ENCODE measurements at regions of chr6 and their contacts with region 1.

Region 1: GRCh38 chr6:34696739-34697543 is at the start of gene ILRUN:
- DNase-seq: peak; percentile 76
- ATAC-seq: peak; percentile 79
- H3K4me3 ChIP-seq: peak within 1 kb of the TSS; percentile 94
- H3K27ac ChIP-seq: peak within 1 kb of the TSS; percentile 94
- H3K4me1 ChIP-seq: no peaks in the 10 kb centered on the region; the same call in 1 of the 2 replicates
- H3K27me3 ChIP-seq: no peaks in the 10 kb centered on the region
- CTCF ChIP-seq: no peak
- EP300 ChIP-seq: no peak
- POLR2A ChIP-seq: peak; percentile 59
- RAD21 ChIP-seq: no peak
- polyA plus RNA-seq, gene ILRUN: 21.0 to 27.2 TPM

Region 2: DNA sequence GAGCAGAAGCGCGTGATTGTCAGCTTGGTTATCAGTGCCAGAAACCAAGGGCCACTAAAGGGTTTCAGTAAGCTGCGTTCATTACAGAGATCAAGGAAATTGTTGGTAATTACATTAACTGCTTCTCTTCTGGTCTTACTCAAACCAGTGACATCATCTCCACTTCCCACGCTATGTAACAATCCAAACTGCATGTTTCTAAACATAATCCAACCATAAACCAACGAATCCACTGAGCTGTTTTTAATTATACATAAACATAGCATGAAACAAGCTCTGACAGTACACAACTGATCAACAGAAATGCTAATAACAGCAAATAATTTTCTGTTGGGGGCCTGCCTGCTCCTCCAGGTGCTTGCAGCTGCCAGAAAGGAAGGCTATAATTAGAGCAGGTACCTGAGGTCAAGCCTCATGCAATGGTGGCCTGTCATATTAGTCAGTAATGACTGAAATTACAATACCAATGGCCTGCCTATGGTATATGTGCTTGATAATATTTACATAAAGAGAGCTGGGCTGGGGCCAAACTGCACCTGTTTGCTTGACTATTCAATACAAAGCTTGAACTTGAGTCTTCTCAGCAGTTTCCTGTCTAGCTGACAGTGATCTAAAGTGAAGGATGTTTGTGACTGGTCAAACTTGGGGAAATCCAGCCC is 40.4 kb before region 1 on chr6:
- CTCF ChIA-PET with region 1: interaction called, 8 read pairs
- POLR2A ChIA-PET with region 1: interaction called, 47 read pairs
- RAD21 ChIA-PET with region 1: interaction called, 35 read pairs
- SMC1A ChIA-PET with region 1: interaction called, 44 read pairs
- in situ Hi-C with region 1: no loop called
- intact Hi-C with region 1: no loop called
- DNase-seq: peak; percentile 97
- ATAC-seq: peak; percentile 89
- H3K4me3 ChIP-seq: peak overlapping the region; percentile 58; the same call in 1 of the 2 replicates
- H3K27ac ChIP-seq: peak overlapping the region; percentile 100
- H3K4me1 ChIP-seq: peaks cover 60% of the 10 kb centered on the region
- H3K27me3 ChIP-seq: no peaks in the 10 kb centered on the region
- CTCF ChIP-seq: no peak
- EP300 ChIP-seq: peak; percentile 95 to 98
- POLR2A ChIP-seq: peak; percentile 57
- RAD21 ChIP-seq: peak; percentile 19; the same call in 1 of the 2 replicates

Region 3: DNA sequence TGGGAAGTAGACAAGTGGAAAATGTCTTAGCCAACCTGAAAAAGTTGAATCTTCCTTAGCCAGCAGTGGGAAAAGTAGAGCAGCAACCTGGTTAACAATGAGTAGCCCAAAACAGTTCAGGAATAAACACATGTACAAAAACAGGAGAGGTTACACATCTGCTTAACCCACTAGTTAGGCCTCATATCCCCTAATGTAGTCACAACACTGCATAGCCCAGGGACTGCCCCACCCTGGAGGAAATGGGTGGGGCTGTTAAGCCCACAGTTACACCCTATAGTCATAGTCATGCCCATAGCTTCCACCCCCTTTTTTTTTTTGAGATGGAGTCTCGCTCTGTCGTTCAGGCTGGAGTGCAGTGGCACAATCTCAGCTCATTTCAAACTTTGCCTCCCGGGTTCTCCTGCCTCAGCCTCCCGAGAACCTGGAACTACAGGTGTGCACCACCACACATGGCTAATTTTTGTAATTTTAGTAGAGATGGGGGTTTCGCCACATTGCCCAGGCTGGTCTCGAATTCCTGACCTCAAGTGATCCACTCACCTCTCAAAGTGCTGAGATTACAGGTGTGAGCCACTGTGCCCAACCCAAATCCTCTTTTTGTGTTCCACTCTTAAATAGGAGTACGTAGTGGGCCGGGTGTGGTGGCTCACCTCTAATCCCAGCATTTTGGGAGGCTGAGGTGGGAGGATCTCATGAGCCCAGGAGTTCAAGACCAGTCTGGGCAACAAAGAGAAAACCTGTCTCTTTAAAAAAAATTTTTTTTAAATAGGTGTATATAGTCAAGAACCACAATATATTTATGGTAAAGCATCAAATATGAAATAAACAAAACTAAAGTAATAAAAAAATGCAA is 24.9 kb before region 1 on chr6:
- CTCF ChIA-PET with region 1: interaction called, 6 read pairs
- POLR2A ChIA-PET with region 1: interaction called, 41 read pairs
- RAD21 ChIA-PET with region 1: interaction called, 60 read pairs
- SMC1A ChIA-PET with region 1: interaction called, 100 read pairs
- in situ Hi-C with region 1: no loop called
- intact Hi-C with region 1: no loop called
- DNase-seq: peak; percentile 84
- ATAC-seq: peak; percentile 88
- H3K4me3 ChIP-seq: peak overlapping the region; percentile 46
- H3K27ac ChIP-seq: peak overlapping the region; percentile 92
- H3K4me1 ChIP-seq: peaks cover 38% of the 10 kb centered on the region
- H3K27me3 ChIP-seq: no peaks in the 10 kb centered on the region
- CTCF ChIP-seq: no peak
- EP300 ChIP-seq: peak; percentile 39 to 44; a peak in 2 of 4 replicates
- POLR2A ChIP-seq: peak; percentile 35; the same call in 1 of the 2 replicates
- RAD21 ChIP-seq: no peak

Region 4: GRCh38 chr6:34757687-34758274 is 60.8 kb after region 1 on chr6:
- CTCF ChIA-PET with region 1: no interaction called
- POLR2A ChIA-PET with region 1: interaction called, 7 read pairs
- RAD21 ChIA-PET with region 1: no interaction called
- SMC1A ChIA-PET with region 1: interaction called, 3 read pairs
- in situ Hi-C with region 1: no loop called
- intact Hi-C with region 1: loop called (anchors 5 kb)
- DNase-seq: no peak
- ATAC-seq: no peak
- H3K4me3 ChIP-seq: peak overlapping the region; percentile 91
- H3K27ac ChIP-seq: peak overlapping the region; percentile 86
- H3K4me1 ChIP-seq: 0 out of 2 replicates have a peak, but pooled peaks cover 5% of the 10 kb centered on the region
- H3K27me3 ChIP-seq: no peaks in the 10 kb centered on the region
- CTCF ChIP-seq: no peak
- EP300 ChIP-seq: no peak
- POLR2A ChIP-seq: no peak
- RAD21 ChIP-seq: no peak

Region 5: GRCh38 chr6:34887753-34888513 is 191.0 kb after region 1 on chr6 and contains the start of gene TAF11:
- CTCF ChIA-PET with region 1: no interaction called
- POLR2A ChIA-PET with region 1: interaction called, 7 read pairs
- RAD21 ChIA-PET with region 1: no interaction called
- SMC1A ChIA-PET with region 1: no interaction called
- in situ Hi-C with region 1: no loop called
- intact Hi-C with region 1: loop called (anchors 5 kb)
- DNase-seq: peak; percentile 61
- ATAC-seq: peak; percentile 89
- H3K4me3 ChIP-seq: peak within 1 kb of the TSS; percentile 97
- H3K27ac ChIP-seq: peak within 1 kb of the TSS; percentile 88
- H3K4me1 ChIP-seq: peaks cover 5% of the 10 kb centered on the region
- H3K27me3 ChIP-seq: no peaks in the 10 kb centered on the region
- CTCF ChIP-seq: no peak
- EP300 ChIP-seq: 0 out of 4 replicates have a peak, but pooled peaks of 1 of the 2 experiments have one; percentile 12
- POLR2A ChIP-seq: peak; percentile 97
- RAD21 ChIP-seq: no peak
- polyA plus RNA-seq, gene TAF11: 24.6 to 31.7 TPM

Region 6: GRCh38 chr6:35024551-35025054 is 327.7 kb after region 1 on chr6:
- CTCF ChIA-PET with region 1: no interaction called
- POLR2A ChIA-PET with region 1: no interaction called
- RAD21 ChIA-PET with region 1: no interaction called
- SMC1A ChIA-PET with region 1: no interaction called
- in situ Hi-C with region 1: no loop called
- intact Hi-C with region 1: no loop called
- DNase-seq: no peak
- ATAC-seq: peak; percentile 52
- H3K4me3 ChIP-seq: no peak overlapping the region
- H3K27ac ChIP-seq: no peak overlapping the region
- H3K4me1 ChIP-seq: no peaks in the 10 kb centered on the region
- H3K27me3 ChIP-seq: no peaks in the 10 kb centered on the region
- CTCF ChIP-seq: no peak
- EP300 ChIP-seq: no peak
- POLR2A ChIP-seq: no peak
- RAD21 ChIP-seq: no peak